ENCODE measurements at regions of chr4 and their contacts with region 1.

Region 1: GRCh38 chr4:15956179-15956850 is 6.7 kb downstream of the FGFBP2 start:
- DNase-seq: peak; percentile 84
- H3K4me3 Mint-ChIP-seq: no peak overlapping the region
- H3K27ac Mint-ChIP-seq: no peak overlapping the region
- H3K4me1 Mint-ChIP-seq: peaks cover 2% of the 10 kb centered on the region
- H3K27me3 Mint-ChIP-seq: peaks cover 24% of the 10 kb centered on the region

Region 2: GRCh38 chr4:15513545-15513944 is 442.8 kb before region 1 on chr4:
- CTCF ChIA-PET with region 1: no interaction called
- POLR2A ChIA-PET with region 1: no interaction called
- DNase-seq: no peak
- H3K4me3 Mint-ChIP-seq: no peak overlapping the region
- H3K27ac Mint-ChIP-seq: no peak overlapping the region
- H3K4me1 Mint-ChIP-seq: peaks cover 2% of the 10 kb centered on the region
- H3K27me3 Mint-ChIP-seq: no peaks in the 10 kb centered on the region

Region 3: DNA sequence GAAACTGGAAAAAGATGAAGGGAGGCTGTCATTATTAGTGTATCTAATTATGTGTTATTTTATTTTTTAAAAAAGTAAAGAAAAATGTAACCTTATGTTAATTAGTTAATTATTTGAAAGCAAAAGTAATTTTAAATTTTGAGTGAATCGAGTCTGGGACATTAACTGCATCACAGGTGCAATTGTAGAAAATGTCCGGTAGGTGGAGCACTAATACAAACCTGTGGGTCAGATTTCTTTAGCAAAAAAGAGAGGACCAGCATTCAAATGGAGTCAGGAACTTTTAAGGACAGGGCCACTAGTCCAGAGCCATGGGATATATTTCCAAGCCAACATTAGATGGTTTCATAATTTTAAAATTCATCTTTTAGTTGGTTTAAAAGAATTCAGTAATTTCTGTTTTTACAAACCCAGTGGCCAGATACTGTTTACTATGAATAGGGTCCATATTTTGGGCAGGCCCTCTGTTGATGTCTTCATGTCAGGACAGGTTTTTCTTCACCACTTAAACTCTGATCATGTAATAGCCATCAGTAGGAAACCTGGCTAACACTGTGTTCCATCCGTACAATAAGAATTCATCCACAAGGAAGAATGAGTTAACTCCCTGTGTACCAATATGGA is 226.3 kb before region 1 on chr4:
- CTCF ChIA-PET with region 1: interaction called, 10 read pairs
- POLR2A ChIA-PET with region 1: no interaction called
- DNase-seq: peak; percentile 25
- H3K4me3 Mint-ChIP-seq: no peak overlapping the region
- H3K27ac Mint-ChIP-seq: no peak overlapping the region
- H3K4me1 Mint-ChIP-seq: peaks cover 15% of the 10 kb centered on the region
- H3K27me3 Mint-ChIP-seq: peaks cover 9% of the 10 kb centered on the region

Region 4: GRCh38 chr4:15805583-15806517 is 150.5 kb before region 1 on chr4:
- CTCF ChIA-PET with region 1: interaction called, 18 read pairs
- POLR2A ChIA-PET with region 1: no interaction called
- DNase-seq: peak; percentile 35
- H3K4me3 Mint-ChIP-seq: no peak overlapping the region
- H3K27ac Mint-ChIP-seq: no peak overlapping the region
- H3K4me1 Mint-ChIP-seq: peaks cover 52% of the 10 kb centered on the region
- H3K27me3 Mint-ChIP-seq: no peaks in the 10 kb centered on the region

Region 5: DNA sequence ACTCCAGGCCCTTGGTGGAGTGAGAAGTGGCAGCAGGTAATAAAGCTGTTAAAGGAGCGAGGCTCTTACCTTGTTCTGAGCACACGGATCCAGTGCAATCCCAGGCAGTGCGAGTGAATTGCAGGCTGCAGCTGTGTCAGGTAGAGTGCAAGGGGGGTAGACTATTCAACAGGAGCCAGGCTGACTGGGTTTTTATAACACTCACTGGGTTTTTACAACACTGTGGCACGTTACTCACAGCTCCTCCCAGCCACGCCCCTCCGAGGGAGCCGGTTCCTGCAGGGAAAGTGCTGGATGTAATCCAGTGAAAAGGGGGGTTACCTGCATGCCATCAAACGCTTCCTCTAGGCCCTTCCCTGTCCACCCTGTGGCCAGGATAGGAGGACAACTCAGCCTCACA is 18.1 kb before region 1 on chr4:
- CTCF ChIA-PET with region 1: no interaction called
- POLR2A ChIA-PET with region 1: no interaction called
- DNase-seq: no peak
- H3K4me3 Mint-ChIP-seq: no peak overlapping the region
- H3K27ac Mint-ChIP-seq: no peak overlapping the region
- H3K4me1 Mint-ChIP-seq: peaks cover 1% of the 10 kb centered on the region
- H3K27me3 Mint-ChIP-seq: peaks cover 31% of the 10 kb centered on the region

Measured in activated CD4-positive, alpha-beta memory T cell treated with anti-CD3 and anti-CD28 coated beads, Interleukin-2, amount 10 ng/mL, durations not matched to agents 7 days and 5 days (primary cell).